Heart right ventricle (tissue), 16 donors: ENCODE measurements at regions of chr17 and their contacts with region 1.

Region 1: DNA sequence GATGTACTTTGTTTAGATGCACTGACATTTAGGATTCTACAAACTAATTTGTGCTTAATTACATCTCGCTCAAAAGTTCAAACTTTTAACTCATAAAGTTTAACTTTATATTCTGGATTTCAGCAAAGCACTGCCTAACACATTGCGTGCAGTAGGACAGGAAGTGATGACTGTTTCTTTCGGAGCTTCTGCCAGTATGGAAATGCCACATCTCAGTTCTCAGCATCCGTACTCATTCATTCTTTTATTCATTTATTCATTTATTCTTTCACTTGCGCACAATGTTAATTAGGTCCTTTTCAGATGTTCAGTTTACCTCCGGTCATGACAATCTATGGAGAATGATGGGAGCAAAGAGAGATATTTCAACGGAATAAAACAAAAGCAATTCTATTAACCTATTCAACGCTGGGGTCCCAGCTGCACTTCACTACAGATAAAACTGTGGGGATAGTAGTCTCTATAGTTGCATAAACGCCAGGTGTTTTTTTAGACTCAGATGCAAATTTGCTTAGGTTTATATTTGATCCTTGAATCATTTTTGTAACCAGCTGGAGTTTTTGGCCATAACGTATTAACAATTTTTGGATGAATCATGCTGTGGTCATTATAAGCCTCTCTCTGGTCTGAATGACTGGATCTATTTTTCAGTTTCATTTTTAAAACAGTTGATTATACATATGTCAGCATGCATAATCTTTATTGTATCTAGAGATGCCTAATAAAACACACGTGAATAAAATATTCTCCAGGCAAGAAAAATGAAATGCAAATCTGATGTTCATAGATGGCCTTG is 143.9 kb downstream of the KCNJ2 start:
- DNase-seq: no peak
- ATAC-seq: no peak
- H3K4me3 ChIP-seq: no peak overlapping the region
- H3K27ac ChIP-seq: peak overlapping the region in 1 of 10 donors; percentile 80
- H3K4me1 ChIP-seq: peaks cover 0 to 27% (median 0%) of the 10 kb centered on the region in 9 donors
- H3K27me3 ChIP-seq: no peaks in the 10 kb centered on the region
- CTCF ChIP-seq: no peak

Region 2: DNA sequence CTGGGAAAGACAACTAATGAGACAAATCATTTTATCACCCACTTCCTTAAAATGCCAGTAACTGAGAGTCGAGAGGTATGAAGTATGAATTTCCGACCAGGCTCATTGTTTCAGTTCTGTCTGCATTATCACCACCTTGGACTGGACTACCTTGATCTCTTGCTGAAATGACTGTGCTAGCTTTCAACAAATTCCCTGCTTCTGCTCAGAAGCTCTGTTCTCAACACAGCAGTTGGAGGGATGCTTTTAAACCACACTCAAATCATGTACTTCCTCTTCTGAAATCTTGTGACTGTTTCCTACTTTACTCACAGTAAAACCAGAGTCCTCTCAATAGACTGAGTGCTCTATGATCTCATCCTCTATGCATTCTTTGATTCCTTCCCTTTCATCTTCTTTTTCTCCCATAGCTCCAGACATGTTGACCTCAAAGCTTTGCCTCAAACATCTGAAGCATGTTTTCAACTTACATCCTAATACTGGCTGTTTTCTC is 51.9 kb after region 1 on chr17:
- intact Hi-C with region 1: no loop called
- DNase-seq: no peak
- ATAC-seq: peak in 1 of 8 donors; percentile 25
- H3K4me3 ChIP-seq: no peak overlapping the region
- H3K27ac ChIP-seq: peak overlapping the region in 1 of 10 donors; percentile 13
- H3K4me1 ChIP-seq: peaks cover 0 to 7% (median 0%) of the 10 kb centered on the region in 9 donors
- H3K27me3 ChIP-seq: peaks cover 0 to 3% (median 0%) of the 10 kb centered on the region in 7 donors
- CTCF ChIP-seq: no peak

Region 3: GRCh38 chr17:70521821-70522256 is 208.6 kb after region 1 on chr17:
- intact Hi-C with region 1: loop called in 2 of 10 experiments (anchors 10 kb)
- DNase-seq: peak; percentile 14 to 62
- ATAC-seq: peak; percentile 16 to 89 (median 82)
- H3K4me3 ChIP-seq: no peak overlapping the region
- H3K27ac ChIP-seq: peak overlapping the region in 7 of 10 donors; percentile 7 to 79 (median 61)
- H3K4me1 ChIP-seq: peaks cover 0 to 23% (median 12%) of the 10 kb centered on the region in 9 donors
- H3K27me3 ChIP-seq: no peaks in the 10 kb centered on the region
- CTCF ChIP-seq: no peak

Region 4: DNA sequence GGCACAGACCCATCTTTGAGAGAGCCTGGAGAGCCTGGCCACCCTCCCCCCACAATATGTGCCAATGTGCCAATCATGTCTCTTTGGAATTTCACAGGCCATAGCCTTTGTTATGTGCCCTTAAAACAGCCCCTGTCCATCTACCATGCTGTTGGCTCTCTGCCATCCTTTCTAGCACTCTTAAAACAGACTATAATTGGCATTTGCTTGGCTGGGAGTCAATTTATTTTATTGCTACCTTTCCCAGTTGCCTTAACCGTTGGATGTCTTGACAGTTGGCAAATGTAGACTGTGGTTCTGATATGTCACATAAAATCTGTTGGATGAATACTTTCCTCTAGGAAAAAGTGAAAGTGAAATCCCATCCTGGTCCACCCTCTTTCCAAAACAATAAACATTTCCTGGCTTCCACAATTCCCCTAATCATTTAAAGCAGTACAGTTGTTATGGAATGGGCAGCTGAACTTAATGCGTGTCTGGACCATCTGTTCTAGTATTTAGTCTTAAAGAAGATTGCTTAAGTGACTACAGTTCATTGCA is 250.1 kb after region 1 on chr17:
- intact Hi-C with region 1: loop called in 3 of 10 experiments (anchors 5 to 10 kb)
- DNase-seq: peak in 1 of 2 donors; percentile 33
- ATAC-seq: peak in 6 of 8 donors; percentile 63 to 97 (median 78)
- H3K4me3 ChIP-seq: no peak overlapping the region
- H3K27ac ChIP-seq: peak overlapping the region in 3 of 10 donors; percentile 15 to 46 (median 39)
- H3K4me1 ChIP-seq: peaks cover 0 to 13% (median 5%) of the 10 kb centered on the region in 9 donors
- H3K27me3 ChIP-seq: no peaks in the 10 kb centered on the region
- CTCF ChIP-seq: no peak